PC-9 (cell line): ENCODE measurements at regions of chr6 and their contacts with region 1.

Region 1: GRCh38 chr6:142026204-142026880 is 106.4 kb upstream of the GJE1 start:
- DNase-seq: peak; percentile 48 to 63
- H3K4me3 ChIP-seq: no peak overlapping the region
- H3K27ac ChIP-seq: peak overlapping the region; percentile 26; the same call in 1 of the 2 replicates
- H3K4me1 ChIP-seq: peaks cover 12% of the 10 kb centered on the region
- H3K27me3 ChIP-seq: no peaks in the 10 kb centered on the region
- CTCF ChIP-seq: no peak

Region 2: GRCh38 chr6:141700819-141701218 is 325.5 kb before region 1 on chr6:
- CTCF ChIA-PET with region 1: no interaction called
- POLR2A ChIA-PET with region 1: no interaction called
- intact Hi-C with region 1: no loop called
- DNase-seq: no peak
- H3K4me3 ChIP-seq: no peak overlapping the region
- H3K27ac ChIP-seq: no peak overlapping the region
- H3K4me1 ChIP-seq: no peaks in the 10 kb centered on the region
- H3K27me3 ChIP-seq: no peaks in the 10 kb centered on the region
- CTCF ChIP-seq: no peak

Region 3: DNA sequence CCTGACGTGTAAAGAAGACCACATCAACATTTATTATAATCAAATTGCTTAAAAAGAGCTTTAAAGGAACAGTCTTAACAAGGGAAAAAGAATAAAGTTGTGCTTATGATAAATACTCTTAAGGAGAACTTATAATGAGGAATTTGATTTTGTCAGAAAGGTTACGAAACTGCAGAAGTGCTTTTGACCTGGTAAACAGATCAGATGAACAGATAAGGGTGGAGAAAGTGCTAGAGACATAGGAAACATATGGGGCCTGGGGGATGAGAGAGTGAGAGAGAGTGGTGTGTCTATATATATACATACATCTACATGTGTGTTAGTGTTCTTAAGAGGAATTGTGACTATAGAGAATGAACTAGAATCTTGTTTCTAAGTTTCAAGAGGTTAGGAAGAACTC is 79.8 kb before region 1 on chr6:
- CTCF ChIA-PET with region 1: no interaction called
- POLR2A ChIA-PET with region 1: no interaction called
- intact Hi-C with region 1: no loop called
- DNase-seq: no peak
- H3K4me3 ChIP-seq: no peak overlapping the region
- H3K27ac ChIP-seq: no peak overlapping the region
- H3K4me1 ChIP-seq: no peaks in the 10 kb centered on the region
- H3K27me3 ChIP-seq: no peaks in the 10 kb centered on the region
- CTCF ChIP-seq: no peak

Region 4: DNA sequence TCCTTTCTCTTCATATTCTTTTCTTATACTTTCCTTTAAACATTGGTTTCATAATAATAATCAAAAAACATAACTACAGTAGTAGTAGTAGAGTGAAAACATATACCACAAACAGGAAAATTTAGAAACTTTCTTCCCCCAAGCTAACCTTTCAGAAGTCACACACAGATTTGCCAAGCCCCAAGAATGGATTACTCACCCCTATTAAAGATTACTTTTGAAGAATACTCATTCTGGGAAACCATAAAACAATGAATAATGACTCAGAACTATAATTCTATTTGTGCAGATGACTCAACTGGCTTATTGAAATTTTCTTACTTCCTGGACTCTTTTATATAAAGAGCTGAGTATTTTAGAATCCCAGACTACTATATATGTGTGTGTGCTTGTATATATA is 13.1 kb before region 1 on chr6:
- CTCF ChIA-PET with region 1: no interaction called
- POLR2A ChIA-PET with region 1: no interaction called
- intact Hi-C with region 1: loop called (anchors 2 kb)
- DNase-seq: peak in 1 of 2 experiments; percentile 87
- H3K4me3 ChIP-seq: no peak overlapping the region
- H3K27ac ChIP-seq: peak overlapping the region; percentile 72
- H3K4me1 ChIP-seq: peaks cover 33% of the 10 kb centered on the region
- H3K27me3 ChIP-seq: no peaks in the 10 kb centered on the region
- CTCF ChIP-seq: no peak

Region 5: DNA sequence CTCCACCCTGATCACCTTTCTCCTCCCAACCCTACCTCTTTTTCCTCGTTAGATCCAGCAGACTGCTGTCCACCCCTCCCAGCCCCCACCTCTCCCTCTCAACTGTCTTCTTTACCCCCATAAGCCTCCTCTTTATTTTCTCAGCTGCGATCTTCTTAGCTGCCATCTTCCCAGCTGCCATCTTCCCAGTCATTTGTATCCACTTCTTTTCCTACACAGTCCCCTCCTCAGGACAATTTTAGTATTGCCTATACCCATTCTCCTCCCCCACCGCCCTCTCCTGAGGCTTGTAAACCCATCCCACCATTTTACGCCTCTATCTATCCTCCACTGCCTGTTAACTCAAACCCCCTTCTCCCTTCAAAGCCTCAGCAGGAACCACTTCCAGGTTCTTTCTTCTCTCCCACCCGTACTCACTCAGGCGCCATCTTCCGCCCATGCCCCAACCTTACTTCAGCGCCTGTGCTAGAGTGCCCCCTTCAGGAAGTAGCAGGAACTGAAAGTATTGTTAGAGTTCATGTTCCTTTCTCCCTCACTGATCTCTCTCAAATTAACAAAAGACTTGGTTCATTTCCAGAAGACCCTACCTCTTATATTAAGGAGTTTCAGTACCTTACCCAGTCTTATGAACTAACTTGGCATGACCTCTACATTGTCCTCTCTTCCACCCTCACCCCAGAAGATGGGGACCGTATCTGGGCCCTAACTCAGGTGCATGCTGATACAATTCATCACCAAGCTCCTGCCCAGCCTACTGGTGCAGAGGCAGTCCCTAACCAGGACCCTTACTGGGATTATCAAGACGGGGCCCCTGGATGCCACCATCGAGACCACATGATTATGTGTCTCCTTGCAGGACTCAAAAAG is 511.5 kb after region 1 on chr6:
- CTCF ChIA-PET with region 1: no interaction called
- POLR2A ChIA-PET with region 1: no interaction called
- intact Hi-C with region 1: no loop called
- DNase-seq: peak in 1 of 2 experiments; percentile 29
- H3K4me3 ChIP-seq: peak overlapping the region; percentile 42; the same call in 1 of the 2 replicates
- H3K27ac ChIP-seq: no peak overlapping the region
- H3K4me1 ChIP-seq: no peaks in the 10 kb centered on the region
- H3K27me3 ChIP-seq: no peaks in the 10 kb centered on the region
- CTCF ChIP-seq: peak; percentile 80